ENCODE measurements at regions of chr14 and their contacts with region 1.

Region 1: DNA sequence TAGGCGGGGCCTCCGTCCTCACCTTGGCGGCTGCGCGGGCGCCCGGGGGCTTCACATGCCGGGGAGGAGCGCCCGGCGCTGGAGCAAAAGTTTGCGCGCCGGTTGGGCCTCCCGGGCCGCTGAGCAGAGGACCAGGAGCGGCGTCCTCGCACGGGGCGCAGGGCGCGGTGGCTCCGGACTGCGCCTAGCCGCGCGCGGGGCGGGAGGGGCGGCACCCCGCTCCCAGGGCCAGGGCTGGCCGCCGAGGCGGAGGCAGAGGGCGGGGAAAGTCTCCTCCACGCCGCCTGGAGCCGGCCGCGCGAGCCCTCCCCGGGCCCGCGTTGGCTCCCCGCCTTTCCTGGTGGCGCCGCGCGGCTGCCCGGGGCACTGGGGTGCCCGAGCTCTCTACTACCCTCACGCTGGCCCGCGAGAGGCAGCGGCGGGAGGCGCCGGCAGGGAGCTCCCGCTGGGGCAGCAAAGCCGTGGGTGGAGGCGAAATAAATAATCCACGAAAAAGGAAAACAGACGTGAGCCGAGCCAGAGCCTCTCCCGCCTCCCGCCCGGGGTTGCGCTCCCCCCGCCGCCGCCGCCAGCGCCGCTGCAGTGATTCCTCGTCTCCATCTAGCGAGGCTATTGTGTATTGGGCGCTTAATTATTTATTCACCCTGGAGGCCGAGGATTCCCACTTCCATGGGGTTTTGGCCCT is 400 bp upstream of the PRIMA1 start:
- DNase-seq: peak; percentile 28 to 60
- ATAC-seq: peak; percentile 85 to 91 (median 88)
- H3K4me3 ChIP-seq: peak overlapping the region; percentile 19 to 66 (median 56)
- H3K27ac ChIP-seq: peak overlapping the region in 9 of 10 donors; percentile 25 to 80 (median 60)
- H3K4me1 ChIP-seq: peaks cover 0 to 21% (median 9%) of the 10 kb centered on the region in 9 donors
- H3K27me3 ChIP-seq: peaks cover 0 to 42% (median 25%) of the 10 kb centered on the region in 7 donors
- CTCF ChIP-seq: peak; percentile 21 to 65 (median 58)

Region 2: DNA sequence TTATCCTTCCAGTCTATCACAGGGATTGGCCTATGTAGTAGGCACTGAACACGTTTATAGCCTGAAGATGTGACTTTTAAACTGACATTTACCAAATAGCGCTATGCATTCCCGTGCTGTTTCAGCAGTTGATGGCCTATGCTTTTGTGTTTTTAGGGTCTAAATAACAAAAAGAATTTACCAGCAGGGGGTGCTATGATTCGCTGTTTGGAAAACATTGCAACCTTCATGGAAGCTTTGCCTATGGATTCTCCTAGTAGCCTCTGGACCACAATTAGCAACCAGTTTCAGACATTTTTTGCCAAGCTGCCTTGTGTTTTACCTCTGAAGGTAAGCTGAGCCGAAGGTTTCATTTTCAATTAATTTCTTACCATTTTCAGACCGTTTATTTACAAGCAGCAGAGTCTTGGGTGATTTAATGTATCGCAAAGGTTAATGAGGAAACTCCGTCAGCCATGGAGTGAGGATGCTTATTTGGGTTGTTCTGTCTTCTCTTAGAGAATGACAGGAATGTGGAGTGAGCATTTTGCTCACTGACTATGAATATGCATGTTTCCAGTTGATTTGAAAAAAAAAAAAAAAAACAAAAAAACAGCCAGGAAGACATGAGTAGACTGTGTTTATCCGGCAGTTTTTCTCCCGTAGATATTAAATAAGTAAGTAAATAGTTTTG is 133.5 kb before region 1 on chr14:
- intact Hi-C with region 1: loop called in 9 of 10 experiments (anchors 1 to 10 kb)
- DNase-seq: peak in 1 of 2 donors; percentile 22
- ATAC-seq: peak in 1 of 8 donors; percentile 57
- H3K4me3 ChIP-seq: no peak overlapping the region
- H3K27ac ChIP-seq: no peak overlapping the region
- H3K4me1 ChIP-seq: no peaks in the 10 kb centered on the region
- H3K27me3 ChIP-seq: peaks cover 0 to 11% (median 0%) of the 10 kb centered on the region in 7 donors
- CTCF ChIP-seq: peak; percentile 17 to 70 (median 57)

Region 3: DNA sequence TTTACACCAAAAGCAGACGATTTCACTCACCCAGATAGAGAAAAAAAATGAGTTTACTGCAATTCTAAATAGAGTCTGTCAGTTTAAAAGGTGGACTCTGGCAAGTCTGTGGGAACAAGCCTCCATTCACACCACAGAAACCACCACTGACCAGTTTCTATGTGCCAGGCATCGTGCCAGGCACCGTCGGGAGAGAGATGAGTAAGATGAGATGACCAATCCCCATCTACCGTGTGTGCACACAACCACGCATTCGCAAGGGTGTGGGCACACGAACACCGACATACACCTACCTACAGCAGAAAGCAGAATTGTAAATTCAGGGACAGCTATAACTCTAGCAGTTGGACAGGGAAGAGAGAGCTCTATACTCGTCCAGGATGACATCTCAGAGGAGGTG is 58.7 kb before region 1 on chr14:
- intact Hi-C with region 1: loop called in 4 of 10 experiments (anchors 2 to 5 kb)
- DNase-seq: no peak
- ATAC-seq: no peak
- H3K4me3 ChIP-seq: no peak overlapping the region
- H3K27ac ChIP-seq: no peak overlapping the region
- H3K4me1 ChIP-seq: no peaks in the 10 kb centered on the region
- H3K27me3 ChIP-seq: no peaks in the 10 kb centered on the region
- CTCF ChIP-seq: no peak

Region 4: DNA sequence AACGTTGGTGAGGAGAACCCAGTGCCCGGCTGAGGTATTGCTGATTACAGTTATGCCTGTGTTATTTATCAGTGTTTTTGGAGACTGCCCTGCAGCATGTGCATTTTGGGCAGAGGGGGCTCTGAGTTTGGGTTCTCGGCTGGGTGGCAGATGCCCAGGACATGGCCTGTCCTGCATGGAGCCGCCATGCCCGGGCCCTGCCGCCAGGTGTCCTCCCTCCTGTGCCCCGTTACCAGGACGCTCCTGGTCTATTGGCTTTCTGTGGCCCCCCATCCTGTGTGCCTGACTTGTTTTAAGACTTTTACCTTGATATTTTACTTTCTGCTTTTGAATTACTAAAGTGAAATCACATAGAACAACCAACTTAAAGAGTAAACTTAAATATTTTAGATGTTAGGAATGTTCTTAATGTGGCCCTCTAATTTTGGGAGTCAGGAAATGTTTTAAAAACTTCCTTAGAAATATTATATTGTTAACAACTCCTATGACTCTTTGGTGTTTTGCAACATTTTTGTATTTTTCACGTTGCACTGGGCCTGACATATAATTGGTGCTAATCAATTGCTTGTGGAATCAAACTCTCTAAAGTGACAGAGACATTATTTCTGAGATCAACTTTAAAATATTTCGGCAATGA is 52.2 kb before region 1 on chr14:
- intact Hi-C with region 1: loop called in 7 of 10 experiments (anchors 1 to 5 kb)
- DNase-seq: no peak
- ATAC-seq: peak in 2 of 8 donors; percentile 54 to 57
- H3K4me3 ChIP-seq: no peak overlapping the region
- H3K27ac ChIP-seq: no peak overlapping the region
- H3K4me1 ChIP-seq: peaks cover 0 to under 1% (median 0%) of the 10 kb centered on the region in 9 donors
- H3K27me3 ChIP-seq: no peaks in the 10 kb centered on the region
- CTCF ChIP-seq: peak in 7 of 9 donors; percentile 21 to 62 (median 47)

Region 5: DNA sequence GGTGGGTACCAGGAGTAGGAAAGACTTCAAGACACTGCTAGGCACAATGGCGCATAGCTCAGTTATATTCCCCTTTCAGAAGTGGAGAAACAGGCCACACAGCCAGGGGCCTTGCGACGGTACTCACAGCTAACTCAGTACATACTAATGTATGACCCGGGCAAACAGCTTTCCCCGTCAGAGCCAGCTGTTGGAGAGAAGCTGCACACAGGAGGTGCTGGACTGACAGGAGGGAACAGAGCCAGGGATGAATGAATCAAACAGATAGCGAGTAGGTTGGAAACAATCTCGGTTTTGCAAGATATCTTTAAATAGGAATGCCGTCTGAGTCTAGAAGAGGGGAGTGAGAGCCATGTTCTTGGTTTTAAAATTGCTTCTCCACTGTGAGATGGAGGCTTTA is 45.9 kb before region 1 on chr14:
- intact Hi-C with region 1: loop called in 4 of 10 experiments (anchors 1 to 5 kb)
- DNase-seq: peak in 1 of 2 donors; percentile 43
- ATAC-seq: peak; percentile 43 to 91 (median 76)
- H3K4me3 ChIP-seq: no peak overlapping the region
- H3K27ac ChIP-seq: peak overlapping the region in 9 of 10 donors; percentile 22 to 85 (median 62)
- H3K4me1 ChIP-seq: peaks cover 3 to 33% (median 14%) of the 10 kb centered on the region in 9 donors
- H3K27me3 ChIP-seq: no peaks in the 10 kb centered on the region
- CTCF ChIP-seq: no peak

Region 6: DNA sequence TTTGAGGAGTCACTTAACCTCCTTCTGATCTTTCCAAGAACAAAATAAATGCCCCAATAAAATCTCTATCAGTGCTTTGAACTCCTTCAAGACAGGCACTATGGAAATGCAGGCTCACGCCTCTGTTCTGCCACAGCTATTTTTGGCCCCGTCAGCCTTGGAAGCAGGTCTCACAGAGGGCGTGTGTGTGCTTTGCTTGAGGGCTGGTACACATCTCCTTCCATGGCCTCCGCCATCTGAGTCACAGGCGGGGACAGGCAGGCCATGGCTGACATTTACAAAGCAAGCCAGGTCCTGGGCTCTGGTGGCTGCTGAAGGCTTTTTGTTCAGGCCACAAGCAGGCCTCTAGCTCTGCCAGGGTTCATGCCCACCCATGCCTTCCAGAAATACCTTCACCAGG is 16.4 kb before region 1 on chr14:
- intact Hi-C with region 1: no loop called
- DNase-seq: peak in 1 of 2 donors; percentile 25
- ATAC-seq: peak in 7 of 8 donors; percentile 45 to 91 (median 86)
- H3K4me3 ChIP-seq: no peak overlapping the region
- H3K27ac ChIP-seq: peak overlapping the region in 7 of 10 donors; percentile 36 to 58 (median 46)
- H3K4me1 ChIP-seq: peaks cover 0 to 13% (median 0%) of the 10 kb centered on the region in 9 donors
- H3K27me3 ChIP-seq: no peaks in the 10 kb centered on the region
- CTCF ChIP-seq: no peak

Region 7: DNA sequence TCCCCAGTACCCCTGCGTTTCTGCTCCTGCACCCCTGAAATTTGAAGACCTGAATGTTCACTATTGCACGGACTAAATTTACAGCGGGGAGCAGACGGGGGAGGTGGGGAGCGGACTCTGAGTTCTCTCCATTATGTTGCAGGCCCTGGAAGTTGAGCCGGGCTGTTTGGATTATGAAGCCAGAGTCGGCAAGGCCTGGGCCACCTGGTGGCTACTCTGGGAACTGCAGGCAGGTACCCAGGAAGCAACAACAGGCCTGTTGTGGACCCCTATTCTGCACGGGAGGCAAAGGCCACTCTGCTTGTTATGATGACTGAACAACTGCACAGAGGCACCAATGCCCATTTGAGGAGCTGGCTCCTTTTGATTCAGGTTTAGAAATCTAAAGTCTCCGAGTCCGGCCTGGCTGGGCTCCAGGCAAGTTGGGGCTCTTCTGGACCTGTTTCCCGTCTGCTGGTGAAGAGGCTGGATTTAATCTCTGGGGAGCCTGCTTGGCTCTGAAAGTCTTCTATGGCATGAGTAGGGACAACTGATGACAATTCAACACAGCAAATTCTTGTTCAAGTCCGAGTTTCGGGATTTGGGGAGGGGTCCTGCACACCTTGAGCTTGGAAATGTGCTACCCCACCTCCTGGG is 104.4 kb after region 1 on chr14:
- intact Hi-C with region 1: loop called in 3 of 10 experiments (anchors 5 kb)
- DNase-seq: peak; percentile 62 to 72
- ATAC-seq: peak in 7 of 8 donors; percentile 49 to 77 (median 66)
- H3K4me3 ChIP-seq: no peak overlapping the region
- H3K27ac ChIP-seq: no peak overlapping the region
- H3K4me1 ChIP-seq: peaks cover 0 to 8% (median 0%) of the 10 kb centered on the region in 9 donors
- H3K27me3 ChIP-seq: peaks cover 0 to 24% (median 9%) of the 10 kb centered on the region in 7 donors
- CTCF ChIP-seq: peak; percentile 93 to 99 (median 97)

Region 8: GRCh38 chr14:95034788-95035187 is 1246.1 kb after region 1 on chr14:
- intact Hi-C with region 1: no loop called
- DNase-seq: no peak
- ATAC-seq: no peak
- H3K4me3 ChIP-seq: no peak overlapping the region
- H3K27ac ChIP-seq: no peak overlapping the region
- H3K4me1 ChIP-seq: no peaks in the 10 kb centered on the region
- H3K27me3 ChIP-seq: peaks cover 0 to 6% (median 0%) of the 10 kb centered on the region in 7 donors
- CTCF ChIP-seq: no peak